HepG2 (cell line): ENCODE measurements at regions of chr4 and their contacts with region 1.

Region 1: GRCh38 chr4:37705571-37705970 is 19.4 kb upstream of the RELL1 start:
- DNase-seq: no peak
- ATAC-seq: no peak
- H3K4me3 ChIP-seq: no peak overlapping the region
- H3K27ac ChIP-seq: no peak overlapping the region
- H3K4me1 ChIP-seq: peaks cover 2% of the 10 kb centered on the region
- H3K27me3 ChIP-seq: no peaks in the 10 kb centered on the region; a peak in 1 of 5 replicates
- CTCF ChIP-seq: no peak
- EP300 ChIP-seq: no peak
- POLR2A ChIP-seq: no peak
- RAD21 ChIP-seq: no peak

Region 2: GRCh38 chr4:37726666-37727065 is 21.1 kb after region 1 on chr4:
- CTCF ChIA-PET with region 1: no interaction called
- POLR2A ChIA-PET with region 1: no interaction called
- in situ Hi-C with region 1: no loop called
- intact Hi-C with region 1: loop called (anchors 2 kb)
- DNase-seq: no peak
- ATAC-seq: no peak
- H3K4me3 ChIP-seq: no peak overlapping the region
- H3K27ac ChIP-seq: peak overlapping the region; percentile 11
- H3K4me1 ChIP-seq: peaks cover 66% of the 10 kb centered on the region
- H3K27me3 ChIP-seq: no peaks in the 10 kb centered on the region
- CTCF ChIP-seq: no peak
- EP300 ChIP-seq: no peak
- POLR2A ChIP-seq: no peak
- RAD21 ChIP-seq: no peak